ENCODE measurements at regions of chr15 and their contacts with region 1.

Region 1: GRCh38 chr15:38010395-38010794 is 76.0 kb downstream of the TMCO5A start:
- DNase-seq: no peak
- ATAC-seq: no peak
- H3K4me3 ChIP-seq: no peak overlapping the region
- H3K27ac ChIP-seq: no peak overlapping the region
- H3K4me1 ChIP-seq: no peaks in the 10 kb centered on the region
- H3K27me3 ChIP-seq: no peaks in the 10 kb centered on the region
- CTCF ChIP-seq: no peak

Region 2: DNA sequence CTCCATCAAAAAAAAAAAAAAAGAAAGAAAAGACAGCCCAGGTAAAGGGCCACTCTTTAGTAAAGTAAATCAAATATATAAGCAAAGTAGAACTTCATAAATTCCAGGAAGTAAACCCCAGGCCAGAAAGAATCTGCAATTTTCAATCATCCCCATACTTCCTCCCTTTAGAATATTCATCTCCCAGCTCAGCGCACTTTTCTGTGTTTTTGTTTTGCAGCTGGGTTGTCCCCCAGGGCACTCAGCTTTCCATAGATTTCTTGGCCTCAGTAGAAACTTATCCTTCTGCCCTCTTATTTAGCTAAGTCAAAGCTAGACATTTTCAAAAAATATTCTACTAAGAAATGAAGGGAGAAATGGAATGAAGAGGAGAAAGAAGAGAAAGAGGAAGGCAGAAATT is 218.2 kb after region 1 on chr15:
- CTCF ChIA-PET with region 1: no interaction called
- POLR2A ChIA-PET with region 1: interaction called, 10 read pairs
- in situ Hi-C with region 1: no loop called
- intact Hi-C with region 1: no loop called
- DNase-seq: no peak
- ATAC-seq: no peak
- H3K4me3 ChIP-seq: no peak overlapping the region
- H3K27ac ChIP-seq: no peak overlapping the region
- H3K4me1 ChIP-seq: peaks cover 2% of the 10 kb centered on the region; the same call in 1 of the 2 replicates
- H3K27me3 ChIP-seq: no peaks in the 10 kb centered on the region
- CTCF ChIP-seq: no peak

Measured in Panc1 (cell line).